ENCODE measurements at regions of chr1 and their contacts with region 1.

Region 1: DNA sequence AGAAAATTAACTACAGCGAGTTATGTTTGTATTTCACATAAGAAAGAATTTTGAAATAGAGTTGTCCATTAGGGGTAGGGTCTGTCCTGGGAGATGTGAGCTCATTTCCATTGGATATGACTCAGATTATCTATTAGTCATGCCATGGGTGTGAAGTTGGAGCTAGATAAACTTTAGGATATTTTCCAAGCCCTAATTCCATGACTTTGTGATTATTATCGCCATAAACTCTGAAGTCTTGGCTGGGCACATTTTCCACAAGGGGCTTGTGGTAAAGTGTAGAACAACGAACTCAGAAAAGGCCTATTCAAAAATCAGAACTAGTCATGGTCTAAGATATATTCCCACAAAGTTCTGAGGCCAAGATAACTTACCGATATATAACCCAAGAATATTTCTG is 396.6 kb downstream of the DPYD start:
- DNase-seq: no peak
- ATAC-seq: no peak
- H3K4me3 ChIP-seq: no peak overlapping the region
- H3K27ac ChIP-seq: no peak overlapping the region
- H3K4me1 ChIP-seq: no peaks in the 10 kb centered on the region
- H3K27me3 ChIP-seq: no peaks in the 10 kb centered on the region
- CTCF ChIP-seq: no peak

Region 2: GRCh38 chr1:97243973-97244560 is 280.1 kb before region 1 on chr1:
- intact Hi-C with region 1: loop called in 4 of 10 experiments (anchors 10 kb)
- DNase-seq: no peak
- ATAC-seq: no peak
- H3K4me3 ChIP-seq: no peak overlapping the region
- H3K27ac ChIP-seq: no peak overlapping the region
- H3K4me1 ChIP-seq: peaks cover 0 to 22% (median 3%) of the 10 kb centered on the region in 9 donors
- H3K27me3 ChIP-seq: no peaks in the 10 kb centered on the region
- CTCF ChIP-seq: peak; percentile 23 to 61 (median 48)

Region 3: DNA sequence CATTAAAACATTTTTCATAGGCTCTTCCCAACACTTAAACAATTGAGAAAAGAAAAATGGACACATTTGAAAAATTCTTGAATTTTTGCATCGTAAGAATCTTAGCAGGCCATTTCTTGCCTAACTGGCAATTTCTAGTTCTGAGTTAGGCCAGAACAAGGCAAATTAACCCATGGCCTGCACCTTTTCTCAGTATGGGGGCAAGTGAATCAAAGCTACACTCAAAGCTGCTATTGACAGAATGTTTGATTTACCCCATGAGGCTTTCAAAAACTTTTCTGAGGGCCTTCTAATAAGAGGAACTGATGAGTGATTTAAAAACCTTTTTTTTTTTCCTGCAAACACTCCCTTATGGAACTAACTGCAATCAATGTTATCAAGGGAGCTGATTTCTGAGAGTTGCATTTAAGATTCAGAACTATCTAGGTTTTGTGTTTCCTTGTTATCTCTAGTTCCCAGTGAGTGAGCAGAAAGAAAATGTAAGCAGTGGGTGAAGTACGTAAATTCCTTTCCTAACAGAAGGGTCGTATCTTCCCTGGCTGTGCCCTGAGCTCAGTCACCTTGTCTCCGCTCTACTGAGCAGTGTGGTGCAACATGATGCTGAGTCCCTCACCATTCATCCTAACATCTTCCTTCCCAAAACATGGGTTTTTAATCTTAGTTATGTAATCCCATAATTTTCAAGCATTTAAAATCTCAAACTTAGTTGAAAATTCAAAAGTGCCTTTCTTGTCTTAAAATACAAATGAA is 43.0 kb after region 1 on chr1:
- intact Hi-C with region 1: no loop called
- DNase-seq: no peak
- ATAC-seq: no peak
- H3K4me3 ChIP-seq: no peak overlapping the region
- H3K27ac ChIP-seq: no peak overlapping the region
- H3K4me1 ChIP-seq: no peaks in the 10 kb centered on the region
- H3K27me3 ChIP-seq: no peaks in the 10 kb centered on the region
- CTCF ChIP-seq: no peak